ENCODE measurements at regions of chr10 and their contacts with region 1.

Region 1: GRCh38 chr10:30818010-30818531 is 188.5 kb upstream of the LYZL2 start:
- DNase-seq: no peak
- H3K4me3 ChIP-seq: no peak overlapping the region
- H3K27ac ChIP-seq: peak overlapping the region in 1 of 2 donors; percentile 61
- H3K4me1 ChIP-seq: no peaks in the 10 kb centered on the region
- H3K27me3 ChIP-seq: peaks cover 0 to 3% of the 10 kb centered on the region in 2 donors
- CTCF ChIP-seq: no peak
- POLR2A ChIP-seq: no peak

Region 2: DNA sequence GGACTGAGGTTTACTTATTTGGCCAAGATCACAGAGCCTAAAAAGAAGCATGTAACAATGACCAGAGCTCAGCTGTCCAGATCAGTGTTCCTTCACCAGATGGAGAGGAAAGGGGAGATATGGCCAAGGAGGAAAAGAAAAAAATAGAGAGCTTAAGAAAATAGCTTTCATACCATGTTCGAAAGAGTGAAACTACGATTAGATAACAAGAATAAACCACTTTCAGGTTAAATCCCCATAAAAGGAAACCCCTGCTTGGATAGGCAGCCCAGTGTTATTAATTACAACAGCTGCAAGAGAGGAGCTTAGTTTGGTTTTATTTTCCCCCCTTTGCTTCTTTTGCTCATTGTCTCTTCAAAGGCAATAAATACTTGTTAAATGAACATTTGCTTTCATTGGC is 52.8 kb after region 1 on chr10:
- intact Hi-C with region 1: loop called (anchors 2 kb)
- DNase-seq: no peak
- H3K4me3 ChIP-seq: no peak overlapping the region
- H3K27ac ChIP-seq: no peak overlapping the region
- H3K4me1 ChIP-seq: no peaks in the 10 kb centered on the region
- H3K27me3 ChIP-seq: no peaks in the 10 kb centered on the region
- CTCF ChIP-seq: no peak
- POLR2A ChIP-seq: no peak

Measured in breast epithelium (tissue), 4 donors.